PC-9 (cell line): ENCODE measurements at regions of chr14 and their contacts with region 1.

Region 1: GRCh38 chr14:101957406-101958234 is 6.8 kb upstream of the DYNC1H1 start:
- DNase-seq: no peak
- H3K4me3 ChIP-seq: no peak overlapping the region
- H3K27ac ChIP-seq: no peak overlapping the region
- H3K4me1 ChIP-seq: peaks cover 14% of the 10 kb centered on the region
- H3K27me3 ChIP-seq: no peaks in the 10 kb centered on the region
- CTCF ChIP-seq: no peak

Region 2: GRCh38 chr14:101601606-101602465 is 355.8 kb before region 1 on chr14:
- CTCF ChIA-PET with region 1: no interaction called
- POLR2A ChIA-PET with region 1: no interaction called
- intact Hi-C with region 1: no loop called
- DNase-seq: no peak
- H3K4me3 ChIP-seq: no peak overlapping the region
- H3K27ac ChIP-seq: no peak overlapping the region
- H3K4me1 ChIP-seq: no peaks in the 10 kb centered on the region
- H3K27me3 ChIP-seq: peaks cover 16% of the 10 kb centered on the region; the same call in 1 of the 2 replicates
- CTCF ChIP-seq: no peak

Region 3: GRCh38 chr14:101884089-101884990 is 73.3 kb before region 1 on chr14:
- CTCF ChIA-PET with region 1: interaction called, 20 read pairs
- POLR2A ChIA-PET with region 1: no interaction called
- intact Hi-C with region 1: no loop called
- DNase-seq: no peak
- H3K4me3 ChIP-seq: no peak overlapping the region
- H3K27ac ChIP-seq: no peak overlapping the region
- H3K4me1 ChIP-seq: no peaks in the 10 kb centered on the region
- H3K27me3 ChIP-seq: no peaks in the 10 kb centered on the region
- CTCF ChIP-seq: no peak

Region 4: DNA sequence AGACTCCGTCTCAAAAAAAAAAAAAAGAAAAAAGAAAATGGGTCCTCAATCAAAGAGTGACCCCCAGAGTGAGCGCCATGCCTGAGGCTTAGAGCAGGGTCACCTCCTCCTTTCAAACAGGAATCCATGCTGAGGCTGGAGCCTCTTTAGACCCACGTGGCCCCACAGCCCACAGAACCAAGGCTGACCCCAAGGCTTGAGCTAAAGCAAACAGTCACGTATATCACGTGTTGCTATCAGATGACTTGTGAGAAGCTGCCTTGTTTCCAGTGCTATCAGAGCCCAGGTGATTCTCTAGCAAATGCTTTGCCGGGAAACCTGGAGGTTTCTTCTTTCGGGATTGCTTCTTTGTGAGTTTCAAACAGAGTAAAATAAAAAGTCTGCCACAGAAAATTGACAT is 24.9 kb before region 1 on chr14:
- CTCF ChIA-PET with region 1: interaction called, 16 read pairs
- POLR2A ChIA-PET with region 1: interaction called, 3 read pairs
- intact Hi-C with region 1: no loop called
- DNase-seq: no peak
- H3K4me3 ChIP-seq: no peak overlapping the region
- H3K27ac ChIP-seq: no peak overlapping the region
- H3K4me1 ChIP-seq: no peaks in the 10 kb centered on the region
- H3K27me3 ChIP-seq: no peaks in the 10 kb centered on the region
- CTCF ChIP-seq: no peak

Region 5: GRCh38 chr14:101997429-101998336 is 40.1 kb after region 1 on chr14:
- CTCF ChIA-PET with region 1: no interaction called
- POLR2A ChIA-PET with region 1: no interaction called
- intact Hi-C with region 1: no loop called
- DNase-seq: no peak
- H3K4me3 ChIP-seq: no peak overlapping the region
- H3K27ac ChIP-seq: no peak overlapping the region
- H3K4me1 ChIP-seq: no peaks in the 10 kb centered on the region
- H3K27me3 ChIP-seq: no peaks in the 10 kb centered on the region
- CTCF ChIP-seq: no peak

Region 6: GRCh38 chr14:102351026-102351425 is 393.4 kb after region 1 on chr14:
- CTCF ChIA-PET with region 1: no interaction called
- POLR2A ChIA-PET with region 1: interaction called, 22 read pairs
- intact Hi-C with region 1: no loop called
- DNase-seq: peak in 1 of 2 experiments; percentile 10
- H3K4me3 ChIP-seq: no peak overlapping the region
- H3K27ac ChIP-seq: no peak overlapping the region
- H3K4me1 ChIP-seq: no peaks in the 10 kb centered on the region
- H3K27me3 ChIP-seq: no peaks in the 10 kb centered on the region
- CTCF ChIP-seq: no peak